Left cardiac atrium (tissue), 4 donors: ENCODE measurements at regions of chr22 and their contacts with region 1.

Region 1: DNA sequence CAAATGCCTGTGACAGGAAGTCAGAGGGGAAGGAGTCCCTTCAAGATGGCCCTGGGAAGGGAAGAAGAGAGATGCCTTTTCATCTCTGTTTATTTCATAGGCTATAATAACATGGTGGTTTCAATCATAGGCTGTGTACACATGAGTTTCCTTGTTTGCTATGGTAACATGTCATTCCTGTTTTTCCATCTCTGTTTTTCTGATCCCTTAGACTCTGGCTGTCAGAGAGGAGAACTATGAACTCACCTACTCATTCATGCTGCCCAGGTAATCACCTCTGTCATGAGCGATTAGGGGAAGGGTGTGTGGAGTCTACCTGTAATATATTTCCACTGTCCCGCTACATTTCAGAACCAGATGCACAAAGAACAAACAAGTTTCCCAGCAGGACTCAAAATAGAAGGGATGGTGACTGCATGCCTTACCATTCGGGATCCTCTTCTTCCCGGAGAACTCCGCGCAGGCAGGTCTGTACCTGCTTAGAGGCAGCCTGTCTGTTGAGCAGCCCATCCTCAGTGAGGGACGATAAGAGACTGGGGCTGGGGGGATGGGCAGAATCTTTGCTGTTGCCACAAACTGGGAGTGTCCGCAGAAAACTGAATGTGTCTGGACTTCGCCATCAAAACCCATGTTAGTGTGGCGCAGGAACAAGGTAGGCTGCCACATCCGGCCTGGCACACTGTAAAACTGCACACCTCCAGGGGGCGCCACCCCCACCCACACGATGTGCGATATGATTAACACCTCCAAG is 7.1 kb upstream of the PEX26 start:
- DNase-seq: no peak
- ATAC-seq: no peak

Region 2: DNA sequence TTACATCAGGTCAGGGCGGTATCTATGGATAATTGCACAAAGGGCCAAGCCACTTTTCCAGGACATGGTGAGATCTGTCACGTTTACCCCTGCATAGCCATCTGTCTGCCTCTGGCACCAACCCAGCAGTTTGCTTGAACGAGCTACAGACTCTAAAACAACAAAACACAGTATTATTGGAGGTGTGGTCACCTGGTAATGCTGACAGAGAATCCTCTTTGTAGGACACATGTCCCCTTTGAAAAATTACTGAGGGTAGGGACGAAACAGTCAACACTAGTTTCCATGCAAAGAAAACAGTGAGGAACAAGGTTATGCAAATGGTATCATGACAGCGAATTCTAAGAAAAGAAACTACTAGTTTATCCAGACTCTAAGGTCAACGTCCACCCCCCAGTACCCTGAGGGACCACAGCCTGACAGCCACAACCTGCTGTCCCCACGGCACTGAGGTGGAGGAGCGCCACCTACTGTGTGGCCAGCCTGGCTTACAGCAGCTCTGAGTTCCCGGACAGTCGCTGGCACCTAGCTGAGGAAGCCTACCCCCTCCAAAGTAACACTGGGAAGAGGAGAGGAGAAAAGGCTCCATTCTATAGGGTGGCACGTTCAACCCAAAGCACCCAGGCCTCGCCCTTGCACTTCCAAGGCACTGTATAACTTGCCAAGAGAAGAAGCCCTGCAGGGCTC is 179.1 kb before region 1 on chr22:
- intact Hi-C with region 1: loop called (anchors 5 kb)
- DNase-seq: peak; percentile 62
- ATAC-seq: peak; percentile 71 to 85

Region 3: GRCh38 chr22:17988800-17989513 is 81.8 kb before region 1 on chr22:
- intact Hi-C with region 1: no loop called
- DNase-seq: no peak
- ATAC-seq: peak in 1 of 2 donors; percentile 12

Region 4: DNA sequence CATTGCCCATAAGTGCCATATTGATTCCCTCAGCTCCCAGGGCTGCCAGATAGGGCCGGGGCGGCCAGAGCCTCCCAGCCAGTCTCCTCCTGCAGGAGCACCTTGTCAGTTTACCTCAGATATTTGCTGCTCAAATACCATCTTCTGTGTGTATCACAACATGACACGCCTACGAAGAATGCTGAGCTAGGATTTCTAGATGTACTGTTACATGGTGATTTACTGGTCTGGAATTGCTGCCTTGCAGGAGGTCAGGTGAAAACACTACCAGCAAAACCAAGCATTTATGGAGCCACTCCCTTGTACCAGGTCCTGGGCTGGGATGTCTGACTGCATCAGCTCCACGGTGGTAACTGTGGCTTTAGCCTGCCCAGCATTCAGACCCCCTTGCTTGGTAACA is 58.2 kb before region 1 on chr22:
- intact Hi-C with region 1: no loop called
- DNase-seq: no peak
- ATAC-seq: peak in 1 of 2 donors; percentile 26

Region 5: DNA sequence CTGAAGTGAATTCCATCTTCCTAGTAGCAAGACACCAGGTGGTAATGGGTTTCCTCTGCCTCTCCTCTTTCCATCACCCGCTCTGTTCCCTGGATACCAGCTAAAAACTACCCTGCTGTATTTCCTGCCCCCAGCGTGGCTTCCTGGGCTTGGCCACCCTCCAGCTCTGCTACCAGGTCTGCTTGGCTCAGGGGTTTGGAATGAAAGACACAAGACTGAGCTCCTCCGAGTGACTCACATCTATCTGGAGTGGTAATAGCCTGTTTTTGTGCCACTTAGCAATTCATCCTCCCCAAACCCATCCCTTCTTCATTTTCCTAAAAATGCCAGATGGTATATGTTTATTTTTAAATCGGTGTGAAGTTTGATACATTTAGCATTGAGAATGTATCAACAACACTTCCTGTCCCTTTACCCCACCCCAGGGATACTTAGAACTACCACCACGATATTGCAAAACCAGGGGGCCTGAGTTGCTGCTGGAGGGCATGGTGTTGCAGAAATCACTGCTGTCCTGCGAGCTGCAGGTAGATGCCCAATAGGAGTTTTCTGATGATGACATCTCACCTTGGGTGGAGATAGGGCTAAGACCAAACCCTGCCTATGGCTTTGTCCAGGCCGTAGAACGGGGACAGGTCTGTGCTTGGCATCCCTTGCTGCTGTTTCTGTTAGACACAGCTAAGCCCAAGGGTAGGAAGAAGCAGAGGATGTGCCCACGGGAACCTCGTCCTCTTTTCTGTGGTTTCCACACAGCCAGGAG is 38.9 kb before region 1 on chr22:
- intact Hi-C with region 1: loop called in 1 of 2 experiments (anchors 5 kb)
- DNase-seq: no peak
- ATAC-seq: peak in 1 of 2 donors; percentile 88

Region 6: GRCh38 chr22:18119409-18120110 is 48.8 kb after region 1 on chr22:
- intact Hi-C with region 1: no loop called
- DNase-seq: no peak
- ATAC-seq: peak; percentile 82 to 84